ENCODE measurements at regions of chr21 and their contacts with region 1.

Region 1: GRCh38 chr21:45136927-45137611 is 62.7 kb downstream of the ADARB1 start:
- DNase-seq: peak; percentile 52
- H3K4me3 ChIP-seq: no peak overlapping the region
- H3K27ac ChIP-seq: no peak overlapping the region
- H3K4me1 ChIP-seq: peaks cover 4% of the 10 kb centered on the region
- H3K27me3 ChIP-seq: no peaks in the 10 kb centered on the region
- CTCF ChIP-seq: peak; percentile 86 to 96 (median 88)

Region 2: DNA sequence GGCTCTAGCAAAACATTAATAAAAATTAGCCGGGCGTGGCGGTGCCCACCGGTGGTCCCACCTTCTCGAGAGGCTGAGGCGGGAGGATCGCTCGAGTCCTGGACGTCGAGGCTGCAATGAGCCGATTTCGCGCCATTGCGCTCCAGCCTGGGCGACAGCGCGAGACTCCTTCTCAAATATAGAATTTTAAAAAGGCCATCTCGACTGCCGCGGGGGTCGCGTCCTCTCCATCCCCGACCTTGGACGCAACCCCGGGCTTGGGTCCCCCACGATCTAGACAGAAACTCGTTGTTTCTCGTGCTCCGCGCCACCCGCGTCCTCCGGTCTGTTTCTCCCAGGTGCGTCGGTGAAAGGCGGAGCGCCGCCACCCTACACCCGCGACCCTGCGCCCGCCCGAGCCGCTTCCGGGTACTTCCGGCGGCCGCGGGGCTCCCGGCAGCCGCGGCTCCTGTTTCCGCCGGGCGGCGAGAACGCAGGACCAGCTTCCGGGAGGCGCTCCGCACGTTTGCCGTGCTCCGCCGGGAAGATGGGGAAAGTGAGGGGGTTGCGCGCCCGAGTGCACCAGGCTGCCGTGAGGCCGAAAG is 197.4 kb before region 1 on chr21 and contains the start of gene SLX9:
- dilution Hi-C with region 1: loop called (anchors 10 kb)
- DNase-seq: no peak
- H3K4me3 ChIP-seq: peak within 1 kb of the TSS; percentile 84 to 96 (median 94)
- H3K27ac ChIP-seq: peak within 1 kb of the TSS; percentile 66
- H3K4me1 ChIP-seq: peaks cover 19% of the 10 kb centered on the region
- H3K27me3 ChIP-seq: no peaks in the 10 kb centered on the region
- CTCF ChIP-seq: no peak
- polyA plus RNA-seq, gene SLX9: 18.5 to 26.8 TPM (median 21.8 TPM) in 3 replicates

Region 3: GRCh38 chr21:45309069-45309986 is 172.3 kb after region 1 on chr21:
- dilution Hi-C with region 1: no loop called
- DNase-seq: no peak
- H3K4me3 ChIP-seq: no peak overlapping the region
- H3K27ac ChIP-seq: no peak overlapping the region
- H3K4me1 ChIP-seq: no peaks in the 10 kb centered on the region
- H3K27me3 ChIP-seq: peaks cover 12% of the 10 kb centered on the region
- CTCF ChIP-seq: peak; percentile 73 to 85 (median 76)

Measured in keratinocyte (primary cell).